Caco-2 (cell line): ENCODE measurements at regions of chr5 and their contacts with region 1.

Region 1: GRCh38 chr5:52693280-52693679 is 94.4 kb upstream of the ITGA1 start:
- DNase-seq: peak in 1 of 2 experiments; percentile 24
- H3K4me3 ChIP-seq: no peak overlapping the region
- H3K4me3 Mint-ChIP-seq: no peak overlapping the region
- H3K27ac Mint-ChIP-seq: no peak overlapping the region
- H3K4me1 ChIP-seq: peaks cover 4% of the 10 kb centered on the region; the same call in 1 of the 2 replicates
- H3K4me1 Mint-ChIP-seq: peaks cover 11% of the 10 kb centered on the region
- H3K27me3 ChIP-seq: no peaks in the 10 kb centered on the region
- H3K27me3 Mint-ChIP-seq: peaks cover 14% of the 10 kb centered on the region
- CTCF ChIP-seq: peak; percentile 50 to 76

Region 2: GRCh38 chr5:52554297-52554696 is 139.0 kb before region 1 on chr5:
- CTCF ChIA-PET with region 1: no interaction called
- POLR2A ChIA-PET with region 1: no interaction called
- intact Hi-C with region 1: no loop called
- DNase-seq: no peak
- H3K4me3 ChIP-seq: no peak overlapping the region
- H3K4me3 Mint-ChIP-seq: no peak overlapping the region
- H3K27ac Mint-ChIP-seq: no peak overlapping the region
- H3K4me1 ChIP-seq: no peaks in the 10 kb centered on the region
- H3K4me1 Mint-ChIP-seq: no peaks in the 10 kb centered on the region
- H3K27me3 ChIP-seq: no peaks in the 10 kb centered on the region
- H3K27me3 Mint-ChIP-seq: peaks cover 6% of the 10 kb centered on the region
- CTCF ChIP-seq: no peak

Region 3: DNA sequence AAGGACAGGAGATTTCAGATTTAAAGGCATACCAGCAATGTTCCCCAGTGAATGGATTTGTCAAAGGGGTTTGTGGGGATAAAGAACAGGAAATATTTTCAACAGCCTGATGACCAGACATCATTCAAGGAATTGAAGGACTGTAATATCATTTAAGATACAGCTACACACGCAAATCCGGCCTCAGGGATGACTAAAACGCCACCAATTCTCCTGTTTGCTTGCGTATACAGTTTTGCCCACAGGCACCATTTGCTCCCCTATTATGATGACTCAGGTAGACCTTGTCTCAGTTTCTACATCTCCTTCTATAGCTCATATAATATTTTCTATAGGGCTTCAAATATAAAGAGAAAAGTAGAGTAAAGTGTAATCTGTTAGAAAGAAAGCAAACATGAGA is 64.7 kb after region 1 on chr5:
- CTCF ChIA-PET with region 1: no interaction called
- POLR2A ChIA-PET with region 1: no interaction called
- intact Hi-C with region 1: loop called (anchors 2 kb)
- DNase-seq: no peak
- H3K4me3 ChIP-seq: no peak overlapping the region
- H3K4me3 Mint-ChIP-seq: no peak overlapping the region
- H3K27ac Mint-ChIP-seq: no peak overlapping the region
- H3K4me1 ChIP-seq: no peaks in the 10 kb centered on the region
- H3K4me1 Mint-ChIP-seq: no peaks in the 10 kb centered on the region
- H3K27me3 ChIP-seq: no peaks in the 10 kb centered on the region
- H3K27me3 Mint-ChIP-seq: peaks cover 6% of the 10 kb centered on the region
- CTCF ChIP-seq: no peak

Region 4: GRCh38 chr5:52915176-52915875 is 222.0 kb after region 1 on chr5:
- CTCF ChIA-PET with region 1: interaction called, 6 read pairs
- POLR2A ChIA-PET with region 1: no interaction called
- intact Hi-C with region 1: loop called (anchors 1 kb)
- DNase-seq: peak; percentile 57 to 78
- H3K4me3 ChIP-seq: 0 out of 2 replicates have a peak overlapping the region, but pooled peaks have one; percentile 12
- H3K4me3 Mint-ChIP-seq: peak overlapping the region; percentile 62
- H3K27ac Mint-ChIP-seq: no peak overlapping the region
- H3K4me1 ChIP-seq: no peaks in the 10 kb centered on the region
- H3K4me1 Mint-ChIP-seq: no peaks in the 10 kb centered on the region
- H3K27me3 ChIP-seq: no peaks in the 10 kb centered on the region
- H3K27me3 Mint-ChIP-seq: no peaks in the 10 kb centered on the region
- CTCF ChIP-seq: peak; percentile 62 to 84